Endothelial cell of umbilical vein (primary cell): ENCODE measurements at regions of chr5 and their contacts with region 1.

Region 1: DNA sequence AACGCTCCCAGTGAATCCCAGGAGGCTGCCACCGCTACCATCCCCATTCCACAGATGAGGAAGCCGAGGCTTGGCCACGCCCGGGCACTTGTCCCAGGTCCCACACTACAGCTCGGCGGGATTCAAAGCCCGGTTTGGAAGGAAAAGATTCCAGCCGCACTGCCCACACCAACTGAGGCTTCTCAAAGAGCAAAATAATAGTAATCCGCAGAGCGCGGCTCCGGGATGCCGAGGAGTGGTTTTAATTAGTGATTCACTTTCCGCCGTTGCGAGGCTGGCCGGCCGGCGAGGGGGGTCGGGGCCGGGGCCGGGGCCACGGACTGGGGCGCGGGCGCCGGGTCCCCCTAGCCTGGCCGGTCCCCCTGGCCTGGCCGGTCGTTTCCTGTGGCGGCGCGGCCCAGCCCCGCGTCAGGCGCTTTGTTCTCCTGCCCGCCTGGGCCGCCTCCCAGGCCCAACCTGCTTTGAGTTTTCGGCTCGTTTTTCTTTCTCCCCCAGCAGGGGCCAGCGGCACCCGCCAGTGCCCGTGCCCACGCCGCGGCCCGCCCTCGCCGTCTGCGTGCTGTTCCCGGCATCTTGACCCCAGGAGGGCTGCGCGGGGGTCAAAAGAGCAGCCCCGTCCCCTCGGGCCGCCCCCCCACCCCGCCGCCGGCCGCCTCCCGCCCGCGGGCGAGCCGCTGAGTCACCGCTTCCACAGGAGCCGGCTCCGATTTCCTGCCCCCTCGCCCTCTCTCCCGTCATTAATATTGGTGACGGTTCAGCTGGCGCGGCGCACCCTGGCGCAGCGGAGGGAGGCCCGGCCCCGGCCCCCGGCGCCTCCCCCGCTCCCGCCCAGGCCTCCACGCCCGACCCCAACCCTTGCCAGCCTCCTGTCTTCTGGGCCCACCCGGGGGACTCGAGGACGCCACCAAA is 31.2 kb downstream of the FGF18 start:
- DNase-seq: peak; percentile 70
- H3K4me3 ChIP-seq: peak overlapping the region in 2 of 3 experiments; percentile 17 to 23
- H3K27ac ChIP-seq: peak overlapping the region; percentile 95
- H3K4me1 ChIP-seq: peaks cover 15% of the 10 kb centered on the region
- H3K27me3 ChIP-seq: peaks cover 0 to 2% of the 10 kb centered on the region in 2 experiments
- CTCF ChIP-seq: no peak
- POLR2A ChIP-seq: peak; percentile 32

Region 2: GRCh38 chr5:171221941-171222340 is 228.7 kb before region 1 on chr5:
- CTCF ChIA-PET with region 1: no interaction called
- POLR2A ChIA-PET with region 1: no interaction called
- dilution Hi-C with region 1: no loop called
- intact Hi-C with region 1: no loop called
- DNase-seq: no peak
- H3K4me3 ChIP-seq: no peak overlapping the region
- H3K27ac ChIP-seq: no peak overlapping the region
- H3K4me1 ChIP-seq: peaks cover 10% of the 10 kb centered on the region
- H3K27me3 ChIP-seq: no peaks in the 10 kb centered on the region
- CTCF ChIP-seq: no peak
- POLR2A ChIP-seq: no peak

Region 3: GRCh38 chr5:171387345-171387969 is 63.2 kb before region 1 on chr5 and contains the start of gene NPM1:
- CTCF ChIA-PET with region 1: no interaction called
- POLR2A ChIA-PET with region 1: no interaction called
- dilution Hi-C with region 1: no loop called
- intact Hi-C with region 1: loop called (anchors 1 kb)
- DNase-seq: peak; percentile 100
- H3K4me3 ChIP-seq: peak within 1 kb of the TSS; percentile 79 to 88 (median 82)
- H3K27ac ChIP-seq: peak within 1 kb of the TSS; percentile 60
- H3K4me1 ChIP-seq: peaks cover 24% of the 10 kb centered on the region
- H3K27me3 ChIP-seq: no peaks in the 10 kb centered on the region
- CTCF ChIP-seq: no peak
- POLR2A ChIP-seq: peak; percentile 99
- total RNA-seq, gene NPM1: 1,592 and 1,695 TPM in 2 replicates